ENCODE measurements at regions of chr13 and their contacts with region 1.

Region 1: GRCh38 chr13:79307866-79308298 is 98.2 kb downstream of the RBM26 start:
- DNase-seq: no peak
- H3K4me3 ChIP-seq: peak overlapping the region in 1 of 3 donors; percentile 31
- H3K27ac ChIP-seq: no peak overlapping the region
- H3K4me1 ChIP-seq: no peaks in the 10 kb centered on the region
- H3K27me3 ChIP-seq: no peaks in the 10 kb centered on the region
- CTCF ChIP-seq: no peak
- POLR2A ChIP-seq: no peak

Region 2: GRCh38 chr13:79096099-79096498 is 211.8 kb before region 1 on chr13:
- intact Hi-C with region 1: no loop called
- DNase-seq: no peak
- H3K4me3 ChIP-seq: no peak overlapping the region
- H3K27ac ChIP-seq: no peak overlapping the region
- H3K4me1 ChIP-seq: no peaks in the 10 kb centered on the region
- H3K27me3 ChIP-seq: no peaks in the 10 kb centered on the region
- CTCF ChIP-seq: no peak
- POLR2A ChIP-seq: no peak

Region 3: DNA sequence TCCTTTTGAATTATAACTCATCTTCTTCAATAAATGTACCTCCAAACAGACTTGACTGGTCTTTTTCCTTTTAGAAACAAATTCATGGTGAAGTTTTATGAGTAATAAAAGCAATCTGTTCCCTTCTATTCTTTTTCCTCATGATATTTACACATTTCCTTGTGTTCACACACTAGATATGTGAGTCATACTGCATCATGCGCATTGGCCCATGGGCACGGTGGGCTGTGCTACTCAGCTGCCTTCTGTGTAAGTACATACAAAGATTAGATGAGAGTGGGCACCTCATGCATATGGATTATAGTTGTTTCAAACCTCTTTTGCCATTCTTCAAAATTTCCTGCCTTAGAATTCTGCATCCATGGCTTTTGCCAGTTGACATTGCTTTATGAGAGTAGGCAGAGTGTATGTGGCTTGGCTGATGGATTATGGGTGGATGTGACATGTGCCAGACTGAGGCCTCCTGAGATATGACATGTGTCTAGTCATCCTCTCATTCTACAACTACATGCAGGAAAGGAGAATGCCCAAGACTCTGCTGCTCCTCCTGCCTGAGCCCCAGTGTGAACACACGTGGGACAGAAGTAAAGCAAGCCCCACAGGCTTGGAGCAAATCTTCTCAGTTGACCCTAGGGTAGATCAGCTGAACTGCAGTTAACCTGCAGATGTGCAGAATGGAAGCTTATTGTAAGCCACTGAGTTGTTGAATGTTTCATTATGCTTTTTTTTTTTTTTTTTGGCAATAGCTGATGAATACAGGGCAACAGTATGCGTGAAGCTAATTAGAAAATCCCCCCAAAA is 11.8 kb before region 1 on chr13:
- intact Hi-C with region 1: no loop called
- DNase-seq: no peak
- H3K4me3 ChIP-seq: no peak overlapping the region
- H3K27ac ChIP-seq: no peak overlapping the region
- H3K4me1 ChIP-seq: no peaks in the 10 kb centered on the region
- H3K27me3 ChIP-seq: peaks cover 0 to 10% of the 10 kb centered on the region in 2 donors
- CTCF ChIP-seq: no peak
- POLR2A ChIP-seq: no peak

Region 4: DNA sequence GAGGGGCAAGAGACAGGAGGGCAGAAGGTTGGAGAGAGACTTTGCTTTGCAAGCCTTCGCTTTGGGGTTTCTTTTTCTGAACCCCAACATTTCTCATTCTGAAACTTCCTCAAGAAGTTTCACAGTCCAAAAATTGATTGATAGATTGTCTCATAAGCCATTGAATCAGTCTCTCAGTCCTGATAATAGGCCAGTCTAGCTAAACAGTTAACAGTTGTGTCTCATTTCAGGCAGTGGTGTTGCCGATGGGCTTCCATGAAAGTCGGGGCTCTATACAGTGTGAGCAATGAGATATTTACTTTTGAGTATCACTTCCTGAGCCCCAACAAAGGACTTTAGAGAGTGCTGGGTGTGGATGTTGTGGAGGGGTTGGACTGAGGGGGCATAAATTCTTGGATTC is 1059.6 kb after region 1 on chr13:
- intact Hi-C with region 1: loop called (anchors 5 kb)
- DNase-seq: no peak
- H3K4me3 ChIP-seq: no peak overlapping the region
- H3K27ac ChIP-seq: no peak overlapping the region
- H3K4me1 ChIP-seq: no peaks in the 10 kb centered on the region
- H3K27me3 ChIP-seq: no peaks in the 10 kb centered on the region
- CTCF ChIP-seq: no peak
- POLR2A ChIP-seq: no peak